SK-N-SH (cell line): ENCODE measurements at regions of chrX and their contacts with region 1.

Region 1: GRCh38 chrX:153539171-153539978 is 21.9 kb downstream of the ATP2B3 start:
- DNase-seq: peak; percentile 88
- H3K4me3 ChIP-seq: peak overlapping the region in 1 of 2 experiments; percentile 37; a peak in 1 of 4 replicates
- H3K27ac ChIP-seq: peak overlapping the region in 1 of 2 experiments; percentile 95; a peak in 2 of 4 replicates
- H3K4me1 ChIP-seq: peaks cover 0 to 59% of the 10 kb centered on the region in 2 experiments; a peak in 1 of 4 replicates
- H3K27me3 ChIP-seq: peaks cover 41% of the 10 kb centered on the region
- CTCF ChIP-seq: peak; percentile 91
- EP300 ChIP-seq: no peak
- RAD21 ChIP-seq: peak; percentile 77

Region 2: GRCh38 chrX:153470435-153471363 is 68.7 kb before region 1 on chrX and contains the start of gene HAUS7:
- CTCF ChIA-PET with region 1: interaction called, 11 read pairs
- POLR2A ChIA-PET with region 1: no interaction called
- DNase-seq: peak; percentile 95
- H3K4me3 ChIP-seq: peak within 1 kb of the TSS; percentile 65 to 73
- H3K27ac ChIP-seq: peak within 1 kb of the TSS in 1 of 2 experiments; percentile 24; a peak in 2 of 4 replicates
- H3K4me1 ChIP-seq: peaks cover 0 to 16% of the 10 kb centered on the region in 2 experiments; a peak in 1 of 4 replicates
- H3K27me3 ChIP-seq: no peaks in the 10 kb centered on the region
- CTCF ChIP-seq: peak; percentile 76
- EP300 ChIP-seq: no peak
- RAD21 ChIP-seq: peak; percentile 83
- polyA plus RNA-seq, gene HAUS7: 27.1 and 39.7 TPM in 2 replicates

Region 3: DNA sequence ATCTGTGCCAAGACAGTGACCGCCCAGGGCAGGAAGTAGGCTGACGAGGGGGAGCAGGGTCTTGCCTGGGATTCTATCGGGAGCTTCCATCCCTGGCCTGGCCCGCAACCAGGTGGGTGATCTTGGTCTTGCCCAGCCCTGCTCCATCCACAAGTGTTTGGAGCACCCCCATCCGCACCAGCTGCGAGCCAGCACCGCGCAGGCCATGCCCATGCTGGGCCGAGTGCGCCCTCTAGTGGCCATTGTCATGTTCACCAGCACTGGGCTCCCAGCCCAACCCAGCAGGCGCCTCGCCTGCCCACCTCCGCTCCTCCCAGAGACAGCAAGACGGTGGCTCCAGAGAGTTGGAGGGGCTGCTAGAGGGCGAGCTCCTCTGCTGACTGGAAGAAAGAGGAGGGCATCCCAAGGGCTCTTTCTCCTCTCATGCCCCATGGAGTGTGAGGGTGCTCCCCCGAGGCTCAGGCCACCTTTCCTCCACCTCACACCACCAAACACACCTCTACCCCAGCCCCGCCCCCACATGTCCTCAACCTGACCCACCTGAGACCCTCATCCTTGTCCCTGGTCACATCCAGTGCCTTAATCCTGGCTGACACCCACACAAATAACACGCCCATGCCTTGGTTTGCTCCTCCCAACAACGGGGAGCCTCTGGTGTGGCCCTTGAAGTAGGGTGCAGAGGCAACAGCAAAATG is 31.7 kb before region 1 on chrX:
- CTCF ChIA-PET with region 1: interaction called, 10 read pairs
- POLR2A ChIA-PET with region 1: no interaction called
- DNase-seq: peak; percentile 94
- H3K4me3 ChIP-seq: no peak overlapping the region; a peak in 1 of 4 replicates
- H3K27ac ChIP-seq: no peak overlapping the region
- H3K4me1 ChIP-seq: peaks cover 0 to 7% of the 10 kb centered on the region in 2 experiments; a peak in 1 of 4 replicates
- H3K27me3 ChIP-seq: no peaks in the 10 kb centered on the region
- CTCF ChIP-seq: peak; percentile 92
- EP300 ChIP-seq: no peak
- RAD21 ChIP-seq: peak; percentile 96

Region 4: DNA sequence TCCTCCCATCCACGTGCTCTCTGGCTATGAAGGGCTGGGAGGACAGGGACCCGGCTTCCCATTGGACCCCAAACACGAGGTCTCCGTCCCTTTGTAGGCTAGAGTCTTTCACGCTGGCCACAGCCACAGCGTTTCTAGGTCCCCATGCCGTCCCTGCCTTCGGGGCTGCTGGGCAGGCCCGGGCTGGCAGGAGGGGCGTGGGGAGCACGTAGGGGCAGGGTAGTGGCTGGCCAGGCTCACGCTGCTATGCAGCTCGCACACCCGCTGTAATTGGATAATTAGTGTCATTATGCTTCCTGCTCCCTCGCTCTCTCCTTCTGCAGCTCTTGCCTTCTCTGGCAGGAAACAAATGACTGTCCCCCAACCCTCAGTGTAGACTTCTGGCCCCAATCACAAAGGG is 12.2 kb before region 1 on chrX:
- CTCF ChIA-PET with region 1: interaction called, 40 read pairs
- POLR2A ChIA-PET with region 1: interaction called, 5 read pairs
- DNase-seq: peak; percentile 71
- H3K4me3 ChIP-seq: no peak overlapping the region
- H3K27ac ChIP-seq: peak overlapping the region in 1 of 2 experiments; percentile 92; a peak in 2 of 4 replicates
- H3K4me1 ChIP-seq: peaks cover 0 to 64% of the 10 kb centered on the region in 2 experiments; a peak in 2 of 4 replicates
- H3K27me3 ChIP-seq: peaks cover 37% of the 10 kb centered on the region
- CTCF ChIP-seq: no peak
- EP300 ChIP-seq: no peak; a peak in 1 of 4 replicates
- RAD21 ChIP-seq: no peak

Region 5: DNA sequence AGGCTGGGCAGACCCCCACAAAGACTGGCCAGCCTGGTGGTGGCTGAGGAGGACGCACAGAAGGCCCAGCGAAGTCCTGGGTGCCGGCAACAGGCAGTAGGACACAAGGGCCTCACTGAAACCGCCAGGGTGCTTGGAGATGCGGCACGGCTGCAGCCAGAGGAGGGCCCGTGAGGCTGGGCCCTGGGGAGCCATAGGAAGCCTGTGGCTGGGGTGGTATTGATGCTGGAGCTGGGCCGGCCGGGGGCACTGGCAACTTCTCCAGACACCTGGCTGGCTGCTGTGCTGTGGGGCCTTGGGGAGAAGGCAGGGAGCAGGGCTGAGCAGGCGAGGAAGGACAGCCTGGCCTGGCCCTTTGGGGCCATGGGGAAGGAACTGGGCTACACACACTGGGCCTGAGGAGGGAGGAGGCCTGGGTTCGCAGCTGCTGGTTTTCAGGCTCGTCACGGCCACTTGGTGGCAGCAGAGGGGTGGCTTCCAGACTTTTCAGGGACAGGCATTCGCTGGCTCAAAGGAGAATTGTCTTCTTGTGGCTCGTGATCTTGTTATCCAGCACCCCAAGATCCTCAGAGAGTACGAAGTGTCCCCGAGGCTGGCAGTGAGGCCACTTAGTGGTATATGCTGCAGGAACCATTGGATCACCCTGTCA is 15.3 kb after region 1 on chrX:
- CTCF ChIA-PET with region 1: interaction called, 27 read pairs
- POLR2A ChIA-PET with region 1: no interaction called
- DNase-seq: peak; percentile 85
- H3K4me3 ChIP-seq: no peak overlapping the region
- H3K27ac ChIP-seq: no peak overlapping the region
- H3K4me1 ChIP-seq: no peaks in the 10 kb centered on the region
- H3K27me3 ChIP-seq: peaks cover 74% of the 10 kb centered on the region
- CTCF ChIP-seq: peak; percentile 77
- EP300 ChIP-seq: no peak
- RAD21 ChIP-seq: peak; percentile 80

Region 6: GRCh38 chrX:153560000-153560399 is 20.6 kb after region 1 on chrX:
- CTCF ChIA-PET with region 1: interaction called, 27 read pairs
- POLR2A ChIA-PET with region 1: no interaction called
- DNase-seq: no peak
- H3K4me3 ChIP-seq: no peak overlapping the region
- H3K27ac ChIP-seq: no peak overlapping the region
- H3K4me1 ChIP-seq: no peaks in the 10 kb centered on the region
- H3K27me3 ChIP-seq: peaks cover 79% of the 10 kb centered on the region
- CTCF ChIP-seq: no peak
- EP300 ChIP-seq: no peak
- RAD21 ChIP-seq: no peak

Region 7: DNA sequence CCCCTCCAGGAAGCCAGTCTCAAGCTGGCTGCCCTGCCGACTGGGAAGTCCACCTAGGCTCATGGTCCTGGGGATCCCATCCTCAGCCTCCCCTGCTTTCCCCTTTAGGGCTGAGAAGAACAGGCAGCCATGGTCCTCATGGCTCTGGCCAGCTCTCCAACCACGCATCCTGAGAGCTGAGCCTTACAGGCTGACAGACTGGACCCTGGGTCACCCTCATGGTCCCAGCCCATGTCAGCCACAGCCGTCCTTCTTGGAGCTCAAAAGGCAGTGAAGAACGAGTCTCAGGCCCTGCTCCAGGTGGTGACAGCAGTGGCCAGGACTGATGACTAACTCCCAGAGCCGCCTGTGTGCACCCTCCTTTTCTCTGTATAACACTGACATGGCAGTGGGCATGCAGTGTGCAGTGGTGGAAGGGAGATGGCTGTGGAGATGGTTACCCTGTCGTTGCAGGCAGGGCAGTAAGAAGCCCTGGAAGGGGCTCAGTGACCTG is 97.3 kb after region 1 on chrX:
- CTCF ChIA-PET with region 1: no interaction called
- POLR2A ChIA-PET with region 1: no interaction called
- DNase-seq: peak; percentile 12
- H3K4me3 ChIP-seq: no peak overlapping the region
- H3K27ac ChIP-seq: no peak overlapping the region
- H3K4me1 ChIP-seq: peaks cover 0 to 22% of the 10 kb centered on the region in 2 experiments; a peak in 1 of 4 replicates
- H3K27me3 ChIP-seq: peaks cover 50% of the 10 kb centered on the region
- CTCF ChIP-seq: 0 out of 2 replicates have a peak, but pooled peaks have one; percentile 5
- EP300 ChIP-seq: no peak
- RAD21 ChIP-seq: no peak

Region 8: DNA sequence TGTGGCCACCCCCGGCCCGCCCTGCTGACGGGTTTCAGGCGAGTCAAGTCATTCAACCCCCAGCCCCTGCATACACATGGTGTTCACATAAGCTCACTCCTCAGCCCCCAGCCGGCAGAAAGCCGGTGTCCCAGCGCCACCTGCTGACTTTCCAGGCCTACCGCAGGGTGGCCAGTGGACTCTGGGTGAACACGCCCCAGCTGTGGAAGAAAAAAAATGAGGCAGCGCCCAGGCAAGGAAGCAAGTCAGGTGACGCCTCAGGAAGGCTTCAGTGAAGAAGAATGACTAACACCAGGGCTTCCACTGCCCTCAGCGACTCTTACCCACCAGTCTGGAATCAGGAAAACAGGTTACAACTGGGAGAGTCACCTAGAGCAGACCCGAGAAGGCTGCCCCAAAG is 169.0 kb after region 1 on chrX:
- CTCF ChIA-PET with region 1: interaction called, 26 read pairs
- POLR2A ChIA-PET with region 1: no interaction called
- DNase-seq: peak; percentile 83
- H3K4me3 ChIP-seq: no peak overlapping the region
- H3K27ac ChIP-seq: peak overlapping the region in 1 of 2 experiments; percentile 27; a peak in 1 of 4 replicates
- H3K4me1 ChIP-seq: peaks cover 0 to 6% of the 10 kb centered on the region in 2 experiments; a peak in 1 of 4 replicates
- H3K27me3 ChIP-seq: peaks cover 16% of the 10 kb centered on the region; the same call in 1 of the 2 replicates
- CTCF ChIP-seq: peak; percentile 70
- EP300 ChIP-seq: no peak
- RAD21 ChIP-seq: peak; percentile 80